Panc1 (cell line): ENCODE measurements at regions of chr21 and their contacts with region 1.

Region 1: GRCh38 chr21:33871171-33871570 is 44.4 kb downstream of the ATP5PO start:
- DNase-seq: no peak
- ATAC-seq: no peak
- H3K4me3 ChIP-seq: no peak overlapping the region
- H3K27ac ChIP-seq: no peak overlapping the region
- H3K4me1 ChIP-seq: no peaks in the 10 kb centered on the region
- H3K27me3 ChIP-seq: no peaks in the 10 kb centered on the region
- CTCF ChIP-seq: no peak

Region 2: DNA sequence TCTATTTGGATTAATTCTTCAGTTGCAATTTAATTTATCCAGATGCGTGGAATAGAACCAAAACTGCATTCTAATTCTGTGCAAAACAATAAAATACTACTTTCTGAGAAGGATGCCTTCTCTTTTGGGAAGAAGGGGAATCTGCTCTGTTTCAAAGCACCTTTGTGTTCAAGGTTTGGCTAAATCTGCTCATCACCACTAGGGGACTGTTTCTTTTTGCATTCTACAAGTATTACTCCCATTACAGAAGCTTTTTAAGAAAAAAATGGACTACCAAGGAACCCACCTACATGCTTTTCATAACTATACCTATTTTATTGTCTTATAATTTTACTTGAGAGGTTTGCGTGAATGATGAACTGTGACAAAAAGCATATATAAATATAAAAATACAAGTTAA is 220.4 kb after region 1 on chr21:
- CTCF ChIA-PET with region 1: no interaction called
- POLR2A ChIA-PET with region 1: interaction called, 10 read pairs
- in situ Hi-C with region 1: no loop called
- intact Hi-C with region 1: no loop called
- DNase-seq: no peak
- ATAC-seq: no peak
- H3K4me3 ChIP-seq: no peak overlapping the region
- H3K27ac ChIP-seq: no peak overlapping the region
- H3K4me1 ChIP-seq: peaks cover 56% of the 10 kb centered on the region
- H3K27me3 ChIP-seq: no peaks in the 10 kb centered on the region
- CTCF ChIP-seq: peak; percentile 34; the same call in 1 of the 2 replicates